CD8-positive, alpha-beta T cell (primary cell): ENCODE measurements at regions of chr9 and their contacts with region 1.

Region 1: GRCh38 chr9:133406480-133407307 is 11.1 kb downstream of the REXO4 start:
- DNase-seq: peak; percentile 62 to 87 (median 83)
- ATAC-seq: peak; percentile 91
- H3K4me3 ChIP-seq: no peak overlapping the region
- H3K4me3 Mint-ChIP-seq: no peak overlapping the region
- H3K27ac ChIP-seq: peak overlapping the region in 1 of 2 experiments; percentile 58
- H3K27ac Mint-ChIP-seq: peak overlapping the region; percentile 64
- H3K4me1 ChIP-seq: peaks cover 3% of the 10 kb centered on the region
- H3K4me1 Mint-ChIP-seq: peaks cover 11% of the 10 kb centered on the region
- H3K27me3 ChIP-seq: no peaks in the 10 kb centered on the region
- H3K27me3 Mint-ChIP-seq: no peaks in the 10 kb centered on the region
- CTCF ChIP-seq: peak; percentile 89

Region 2: DNA sequence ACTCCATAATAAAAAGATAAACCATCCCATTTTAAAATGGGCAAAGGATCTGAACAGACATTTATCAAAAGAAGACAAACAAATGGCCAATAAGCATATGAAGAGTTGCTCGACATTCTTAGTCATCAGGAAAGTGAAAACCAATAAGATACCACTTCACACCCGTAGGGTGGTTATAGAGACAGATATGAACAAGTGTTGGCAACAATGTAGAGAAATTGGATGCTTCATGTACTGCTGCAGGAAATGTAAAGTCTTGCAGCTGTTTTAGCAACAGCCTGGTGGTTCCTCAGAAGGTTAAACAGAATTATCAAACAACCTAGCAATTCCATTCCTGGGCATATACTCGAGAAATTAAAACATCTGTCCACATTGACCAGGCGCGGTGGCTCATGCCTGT is 693.9 kb before region 1 on chr9:
- CTCF ChIA-PET with region 1: no interaction called
- POLR2A ChIA-PET with region 1: no interaction called
- intact Hi-C with region 1: no loop called
- DNase-seq: no peak
- ATAC-seq: no peak
- H3K4me3 ChIP-seq: no peak overlapping the region
- H3K4me3 Mint-ChIP-seq: no peak overlapping the region
- H3K27ac ChIP-seq: no peak overlapping the region
- H3K27ac Mint-ChIP-seq: no peak overlapping the region
- H3K4me1 ChIP-seq: no peaks in the 10 kb centered on the region
- H3K4me1 Mint-ChIP-seq: no peaks in the 10 kb centered on the region
- H3K27me3 ChIP-seq: peaks cover 0 to 3% of the 10 kb centered on the region in 2 experiments
- H3K27me3 Mint-ChIP-seq: peaks cover 25% of the 10 kb centered on the region
- CTCF ChIP-seq: no peak

Region 3: DNA sequence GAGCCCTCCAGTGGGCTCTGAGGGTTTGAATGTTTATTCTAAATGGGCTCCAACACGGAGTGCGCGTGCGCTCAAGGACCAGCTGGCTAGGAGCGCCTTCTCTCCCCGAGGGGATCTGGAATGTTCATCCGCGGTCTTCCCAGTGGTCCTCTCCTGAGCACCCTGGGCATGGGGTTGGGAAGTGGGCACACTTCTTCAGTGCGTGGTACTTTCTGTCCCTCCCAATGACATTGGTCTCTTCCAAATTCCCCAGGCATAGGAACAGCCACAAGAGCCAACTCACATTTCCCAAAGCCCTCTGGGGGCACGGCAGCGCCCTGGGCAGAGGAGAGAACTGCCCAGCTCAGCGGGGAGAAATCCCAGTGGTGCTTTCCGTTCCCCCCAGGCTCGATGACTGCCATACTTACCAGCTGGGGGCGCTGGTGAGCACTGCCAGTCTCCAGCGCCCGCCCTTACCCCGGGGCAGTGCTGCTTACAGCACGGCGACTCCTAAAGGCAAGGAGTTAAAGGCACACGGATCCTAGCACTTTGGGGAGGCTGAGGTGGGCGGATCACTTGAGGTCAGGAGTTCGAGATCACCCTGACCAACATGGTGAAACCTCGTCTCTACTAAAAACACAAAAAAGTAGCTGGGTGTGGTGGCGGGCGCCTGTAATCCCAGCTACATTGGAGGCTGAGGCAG is 167.7 kb before region 1 on chr9:
- CTCF ChIA-PET with region 1: interaction called, 4 read pairs
- POLR2A ChIA-PET with region 1: no interaction called
- intact Hi-C with region 1: loop called in 1 of 2 experiments (anchors 1 kb)
- DNase-seq: peak; percentile 26 to 78 (median 67)
- ATAC-seq: peak; percentile 92
- H3K4me3 ChIP-seq: peak overlapping the region; percentile 36 to 50
- H3K4me3 Mint-ChIP-seq: peak overlapping the region; percentile 76
- H3K27ac ChIP-seq: no peak overlapping the region
- H3K27ac Mint-ChIP-seq: no peak overlapping the region
- H3K4me1 ChIP-seq: peaks cover 17% of the 10 kb centered on the region
- H3K4me1 Mint-ChIP-seq: peaks cover 10% of the 10 kb centered on the region
- H3K27me3 ChIP-seq: peaks cover 0 to 7% of the 10 kb centered on the region in 2 experiments
- H3K27me3 Mint-ChIP-seq: peaks cover 13% of the 10 kb centered on the region
- CTCF ChIP-seq: peak; percentile 72

Region 4: GRCh38 chr9:133429641-133430161 is 23.0 kb after region 1 on chr9:
- CTCF ChIA-PET with region 1: no interaction called
- POLR2A ChIA-PET with region 1: no interaction called
- intact Hi-C with region 1: no loop called
- DNase-seq: peak in 4 of 9 experiments; percentile 22 to 42 (median 32)
- ATAC-seq: peak; percentile 44
- H3K4me3 ChIP-seq: no peak overlapping the region
- H3K4me3 Mint-ChIP-seq: peak overlapping the region; percentile 58
- H3K27ac ChIP-seq: no peak overlapping the region
- H3K27ac Mint-ChIP-seq: no peak overlapping the region
- H3K4me1 ChIP-seq: peaks cover 6% of the 10 kb centered on the region
- H3K4me1 Mint-ChIP-seq: peaks cover 6% of the 10 kb centered on the region
- H3K27me3 ChIP-seq: peaks cover 8 to 12% of the 10 kb centered on the region in 2 experiments
- H3K27me3 Mint-ChIP-seq: peaks cover 26% of the 10 kb centered on the region
- CTCF ChIP-seq: no peak

Region 5: GRCh38 chr9:133910855-133911514 is 504.3 kb after region 1 on chr9:
- CTCF ChIA-PET with region 1: no interaction called
- POLR2A ChIA-PET with region 1: no interaction called
- intact Hi-C with region 1: no loop called
- DNase-seq: no peak
- ATAC-seq: no peak
- H3K4me3 ChIP-seq: no peak overlapping the region
- H3K4me3 Mint-ChIP-seq: no peak overlapping the region
- H3K27ac ChIP-seq: no peak overlapping the region
- H3K27ac Mint-ChIP-seq: no peak overlapping the region
- H3K4me1 ChIP-seq: no peaks in the 10 kb centered on the region
- H3K4me1 Mint-ChIP-seq: no peaks in the 10 kb centered on the region
- H3K27me3 ChIP-seq: no peaks in the 10 kb centered on the region
- H3K27me3 Mint-ChIP-seq: no peaks in the 10 kb centered on the region
- CTCF ChIP-seq: no peak